GM13977 (cell line): ENCODE measurements at regions of chr4 and their contacts with region 1.

Region 1: GRCh38 chr4:139416073-139416673 is 37.7 kb upstream of the RAB33B start:
- DNase-seq: peak; percentile 16
- CTCF ChIP-seq: peak; percentile 61

Region 2: GRCh38 chr4:138761638-138762220 is 654.4 kb before region 1 on chr4:
- in situ Hi-C with region 1: no loop called
- DNase-seq: no peak
- CTCF ChIP-seq: no peak

Region 3: DNA sequence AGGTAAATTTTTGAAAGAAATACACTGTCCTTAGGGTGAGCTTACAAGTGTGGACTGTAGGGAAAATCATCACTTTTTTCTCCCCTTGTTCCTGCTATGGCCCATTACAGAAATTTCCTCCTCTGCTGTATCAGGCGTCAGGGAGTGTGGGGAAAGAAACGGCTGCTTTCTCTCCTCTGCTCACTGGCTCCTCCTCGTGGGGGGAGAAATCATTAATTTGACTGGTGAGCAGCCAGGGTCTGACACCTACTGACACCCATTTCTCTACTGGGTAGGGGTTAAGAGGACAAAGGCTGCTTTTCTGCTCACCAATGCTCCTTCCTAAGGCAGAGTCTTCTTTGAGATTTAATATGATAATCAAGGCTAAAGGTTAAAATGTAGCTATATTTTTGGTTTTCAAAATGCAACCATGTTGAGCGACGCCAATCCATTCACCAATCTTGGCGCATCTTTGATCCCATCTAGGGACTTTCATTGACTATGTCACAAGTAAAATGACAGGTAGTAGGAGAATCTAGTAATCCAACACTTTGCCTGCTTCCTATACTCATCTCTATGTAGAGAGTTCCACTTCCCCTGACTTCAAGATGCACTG is 114.8 kb after region 1 on chr4:
- in situ Hi-C with region 1: loop called (anchors 10 kb)
- DNase-seq: peak; percentile 71
- CTCF ChIP-seq: peak; percentile 90

Region 4: DNA sequence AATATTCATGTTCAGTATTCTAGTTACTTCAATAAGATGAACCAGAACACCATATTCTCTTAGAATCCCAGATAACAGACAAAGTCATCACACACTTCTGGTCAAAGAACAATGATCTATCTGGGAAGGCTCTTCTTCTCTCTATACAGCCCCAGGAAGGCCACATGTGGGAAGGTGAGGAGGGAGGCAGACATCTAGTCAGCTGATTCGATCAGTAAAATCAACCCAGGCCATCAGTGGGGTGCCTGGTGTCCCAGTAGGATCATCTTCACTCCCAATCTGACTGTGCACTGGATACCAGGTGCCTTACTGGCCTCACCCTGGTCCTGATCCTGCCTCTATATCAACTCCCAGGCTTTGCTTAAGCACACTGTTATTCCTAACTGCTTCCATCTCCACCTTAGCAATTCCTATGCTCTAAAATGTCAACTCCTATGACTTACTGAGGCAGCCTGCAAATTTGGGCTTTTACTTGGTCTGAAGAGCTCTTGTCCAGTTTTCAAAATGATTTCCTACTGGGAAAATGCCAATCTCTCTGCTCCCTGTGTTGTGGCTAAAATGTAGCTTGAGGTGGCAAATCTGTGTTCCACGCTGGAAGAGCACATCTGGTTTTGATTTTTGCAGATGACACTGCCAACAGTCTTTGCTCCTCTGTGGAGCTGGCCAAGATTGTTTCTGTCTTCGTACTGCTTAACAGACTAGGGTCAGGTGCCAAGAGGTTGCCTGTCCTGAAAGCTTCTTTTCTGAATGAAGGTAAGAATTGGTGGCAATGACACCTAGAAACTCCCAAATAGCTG is 378.2 kb after region 1 on chr4:
- in situ Hi-C with region 1: no loop called
- DNase-seq: no peak
- CTCF ChIP-seq: no peak

Region 5: DNA sequence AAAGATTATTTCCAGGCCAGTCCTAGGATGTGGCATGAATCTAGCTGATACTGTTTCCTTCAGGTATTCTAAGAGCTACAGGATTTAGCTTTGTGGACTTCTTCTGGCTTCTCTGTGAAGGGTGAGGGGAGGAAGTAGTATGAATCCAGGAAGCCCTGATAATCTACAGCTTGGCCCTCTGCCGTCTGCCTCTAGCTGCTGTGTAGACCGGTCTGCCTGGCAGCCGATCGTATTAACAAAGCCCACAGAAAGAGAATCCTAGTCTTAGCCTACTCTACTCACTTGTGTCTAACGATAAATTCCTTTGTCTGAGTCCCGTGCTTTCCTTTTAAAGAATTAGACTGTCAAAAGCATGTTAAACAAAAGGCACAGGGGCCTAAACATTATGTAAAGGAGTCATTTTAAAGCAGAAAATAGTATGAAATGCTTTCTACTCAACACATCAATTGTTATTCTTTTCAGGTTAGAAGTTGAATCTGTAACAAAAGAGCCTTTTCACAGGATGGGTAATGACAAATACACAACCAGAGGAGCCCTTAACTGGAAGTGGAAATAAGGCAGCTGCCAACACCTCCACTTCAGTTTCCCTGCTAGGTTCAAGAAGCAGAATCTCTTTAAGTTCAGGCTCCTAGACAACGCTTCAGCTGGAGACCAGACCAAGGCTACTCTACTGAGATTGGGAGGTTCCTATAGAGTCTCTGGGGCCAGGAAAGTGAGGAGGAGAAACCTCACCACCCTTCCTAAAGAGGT is 1201.5 kb after region 1 on chr4:
- in situ Hi-C with region 1: no loop called
- DNase-seq: no peak
- CTCF ChIP-seq: no peak